GM12878 (cell line): ENCODE measurements at regions of chr13 and their contacts with region 1.

Region 1: DNA sequence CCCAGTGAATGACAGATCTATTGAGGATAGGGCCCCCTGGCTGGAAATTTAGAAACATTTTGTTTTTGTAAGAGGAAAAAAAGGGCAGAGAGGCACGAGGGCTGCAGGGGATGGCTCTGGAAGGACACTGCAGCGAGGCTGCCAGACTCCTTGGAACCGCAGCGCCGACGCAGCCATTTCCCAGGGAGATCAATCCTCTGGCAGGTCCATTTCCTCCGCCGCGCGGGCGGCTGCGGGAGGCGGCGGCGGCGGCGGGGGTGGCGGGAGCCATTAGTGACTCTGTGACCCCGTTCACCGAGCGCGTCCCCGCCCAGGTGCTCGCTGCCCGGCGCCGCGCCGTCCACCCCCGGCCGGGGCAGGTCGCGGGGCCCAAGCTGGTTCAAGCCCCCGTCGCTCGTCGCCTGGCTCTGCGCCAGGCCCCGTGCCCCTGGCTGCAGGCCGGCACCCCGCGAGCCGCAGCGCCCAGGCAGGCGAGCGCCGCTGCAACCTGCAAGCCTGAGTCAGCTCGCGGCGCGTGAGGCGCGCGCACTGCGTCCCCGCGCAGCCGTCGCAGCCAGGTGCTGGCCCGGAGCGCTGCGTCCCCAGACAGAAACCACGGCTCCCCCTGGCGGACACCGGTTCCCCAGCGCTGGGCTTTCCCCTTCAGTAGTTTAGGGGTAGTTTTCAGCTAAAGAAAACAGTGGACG is 192.6 kb downstream of the KATNAL1 start:
- DNase-seq: no peak
- ATAC-seq: peak; percentile 95
- H3K4me3 ChIP-seq: peak overlapping the region; percentile 63
- H3K27ac ChIP-seq: no peak overlapping the region
- H3K4me1 ChIP-seq: peaks cover 9% of the 10 kb centered on the region; the same call in 1 of the 2 replicates
- H3K27me3 ChIP-seq: no peaks in the 10 kb centered on the region
- CTCF ChIP-seq: peak; percentile 86 to 96 (median 95)
- EP300 ChIP-seq: peak in 1 of 2 experiments; percentile 19; a peak in 1 of 4 replicates
- POLR2A ChIP-seq: peak; percentile 84
- RAD21 ChIP-seq: peak; percentile 79

Region 2: DNA sequence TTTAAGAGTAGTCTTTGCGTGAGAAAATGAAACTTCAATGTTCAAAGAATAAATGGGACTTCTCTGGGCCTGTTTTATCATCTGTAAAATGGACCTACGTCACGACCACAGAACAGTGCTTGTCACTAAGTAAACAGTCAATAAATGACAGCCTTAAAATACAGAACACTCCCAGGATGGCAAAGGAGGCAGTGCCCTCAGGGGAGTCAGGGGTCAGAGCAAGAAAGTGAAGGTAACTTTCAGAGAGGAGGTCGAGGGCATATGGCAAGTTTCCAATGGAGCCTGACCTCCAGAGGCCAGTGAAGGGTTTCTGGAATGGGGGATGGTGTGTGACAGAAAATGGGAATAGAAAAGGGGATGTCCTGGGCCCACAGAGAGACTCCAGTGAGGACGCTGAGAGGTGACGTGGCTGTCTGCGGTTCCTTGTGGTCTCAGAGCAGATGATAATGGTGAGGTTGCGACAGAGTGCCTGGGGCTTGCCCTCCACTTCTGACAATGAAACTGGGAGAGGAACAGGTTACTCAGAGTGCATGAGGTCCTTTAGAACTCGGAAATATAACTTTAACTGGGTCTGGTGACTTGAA is 356.1 kb before region 1 on chr13:
- CTCF ChIA-PET with region 1: interaction called, 8 read pairs
- POLR2A ChIA-PET with region 1: no interaction called
- RAD21 ChIA-PET with region 1: interaction called, 5 read pairs
- SMC1A ChIA-PET with region 1: interaction called, 29 read pairs
- in situ Hi-C with region 1: no loop called
- intact Hi-C with region 1: no loop called
- DNase-seq: peak; percentile 74
- ATAC-seq: peak; percentile 96
- H3K4me3 ChIP-seq: no peak overlapping the region
- H3K27ac ChIP-seq: no peak overlapping the region
- H3K4me1 ChIP-seq: peaks cover 3% of the 10 kb centered on the region; the same call in 1 of the 2 replicates
- H3K27me3 ChIP-seq: no peaks in the 10 kb centered on the region
- CTCF ChIP-seq: no peak
- EP300 ChIP-seq: peak; percentile 67 to 76; a peak in 3 of 4 replicates
- POLR2A ChIP-seq: no peak
- RAD21 ChIP-seq: no peak

Region 3: GRCh38 chr13:29817604-29818378 is 296.9 kb before region 1 on chr13:
- CTCF ChIA-PET with region 1: interaction called, 33 read pairs
- POLR2A ChIA-PET with region 1: interaction called, 4 read pairs
- RAD21 ChIA-PET with region 1: interaction called, 10 read pairs
- SMC1A ChIA-PET with region 1: interaction called, 4 read pairs
- in situ Hi-C with region 1: no loop called
- intact Hi-C with region 1: no loop called
- DNase-seq: peak; percentile 69
- ATAC-seq: peak; percentile 97
- H3K4me3 ChIP-seq: peak overlapping the region; percentile 46; the same call in 1 of the 2 replicates
- H3K27ac ChIP-seq: peak overlapping the region; percentile 87
- H3K4me1 ChIP-seq: peaks cover 23% of the 10 kb centered on the region; the same call in 1 of the 2 replicates
- H3K27me3 ChIP-seq: no peaks in the 10 kb centered on the region
- CTCF ChIP-seq: no peak
- EP300 ChIP-seq: peak; percentile 38 to 54; a peak in 2 of 4 replicates
- POLR2A ChIP-seq: no peak
- RAD21 ChIP-seq: 0 out of 2 replicates have a peak, but pooled peaks have one; percentile 12

Region 4: DNA sequence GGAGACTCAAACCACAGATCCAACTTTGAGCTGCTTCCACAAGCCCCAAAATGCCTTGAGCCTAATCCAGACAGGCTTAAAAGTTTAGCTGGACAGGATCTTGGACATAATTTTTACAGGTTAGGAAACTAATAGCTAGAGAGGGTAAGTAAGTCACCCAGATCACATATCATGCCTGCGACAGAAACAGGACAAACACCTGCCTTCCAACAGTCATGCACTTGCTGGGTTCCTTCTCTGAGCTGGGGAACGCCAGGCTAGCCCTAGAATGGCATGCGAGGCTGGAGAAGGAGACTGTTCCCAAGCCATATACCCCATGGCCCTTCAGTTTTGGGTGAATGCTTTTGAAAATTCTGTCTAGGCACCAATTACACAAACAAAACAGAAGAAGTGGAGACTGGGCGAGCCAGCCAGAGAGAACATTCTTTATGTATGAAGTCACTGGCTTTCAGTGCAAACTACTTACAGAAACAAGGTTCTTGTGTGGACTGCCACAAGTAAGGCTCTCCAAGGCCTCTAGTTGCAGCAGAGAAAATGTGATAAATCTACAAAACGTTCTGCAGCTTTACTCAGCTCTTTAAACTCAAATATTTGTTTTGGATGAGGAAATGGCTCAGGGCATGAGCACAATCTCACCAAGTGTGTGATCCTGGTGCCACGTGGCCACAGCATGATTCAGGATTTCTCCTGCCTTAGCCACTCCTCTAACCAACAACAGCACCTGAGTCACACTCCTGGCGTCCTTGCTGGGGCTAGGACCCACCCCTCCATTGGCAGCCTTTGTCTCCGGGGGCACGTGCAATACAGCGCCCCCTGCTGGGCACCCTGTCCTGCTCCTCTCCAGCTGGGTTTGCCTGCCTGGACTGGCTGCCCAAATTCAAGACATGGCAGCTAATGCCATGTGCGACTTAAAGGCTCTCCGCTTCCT is 190.9 kb before region 1 on chr13:
- CTCF ChIA-PET with region 1: interaction called, 20 read pairs
- POLR2A ChIA-PET with region 1: no interaction called
- RAD21 ChIA-PET with region 1: interaction called, 8 read pairs
- SMC1A ChIA-PET with region 1: interaction called, 5 read pairs
- in situ Hi-C with region 1: no loop called
- intact Hi-C with region 1: no loop called
- DNase-seq: no peak
- ATAC-seq: peak; percentile 89
- H3K4me3 ChIP-seq: no peak overlapping the region
- H3K27ac ChIP-seq: no peak overlapping the region
- H3K4me1 ChIP-seq: peaks cover 5% of the 10 kb centered on the region; the same call in 1 of the 2 replicates
- H3K27me3 ChIP-seq: no peaks in the 10 kb centered on the region
- CTCF ChIP-seq: peak; percentile 49 to 89 (median 89)
- EP300 ChIP-seq: no peak
- POLR2A ChIP-seq: no peak
- RAD21 ChIP-seq: peak; percentile 58

Region 5: DNA sequence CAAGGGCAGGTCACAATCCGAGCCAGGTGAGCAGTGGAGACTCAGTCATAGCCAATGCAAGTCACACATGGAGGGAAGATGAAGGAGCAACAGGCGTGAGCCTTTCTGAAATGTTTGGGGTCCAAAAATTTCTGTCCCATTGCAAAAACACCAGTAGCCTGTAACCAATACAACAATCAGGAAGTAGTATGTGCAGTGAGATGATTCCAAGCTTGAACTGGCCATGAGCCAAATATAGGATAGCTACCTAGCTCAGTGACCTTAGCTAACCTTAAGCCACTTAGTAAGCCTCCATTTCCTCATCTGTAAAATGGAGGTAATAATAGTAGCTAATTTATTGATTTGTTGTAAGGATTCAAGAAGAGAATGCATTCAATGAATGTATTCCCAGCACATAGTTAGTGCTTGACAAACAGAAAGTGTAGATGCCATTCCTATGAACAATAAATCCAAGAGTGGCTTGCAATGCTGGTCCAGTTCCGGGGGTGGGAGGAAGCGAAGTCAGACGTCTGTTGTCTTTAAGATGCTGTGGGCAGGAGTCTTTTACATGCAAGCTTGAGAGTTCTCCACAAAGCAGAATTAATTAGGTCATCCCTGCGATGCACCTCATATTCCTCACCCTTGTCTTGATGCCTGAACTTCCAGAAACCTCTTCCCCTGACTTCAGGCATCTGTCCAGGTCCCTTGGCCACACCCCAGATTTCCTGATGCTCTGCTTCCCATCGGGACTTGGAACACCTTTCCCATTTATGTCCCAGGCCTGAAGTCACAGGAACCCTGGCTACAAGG is 68.6 kb before region 1 on chr13:
- CTCF ChIA-PET with region 1: interaction called, 11 read pairs
- POLR2A ChIA-PET with region 1: no interaction called
- RAD21 ChIA-PET with region 1: interaction called, 3 read pairs
- SMC1A ChIA-PET with region 1: no interaction called
- in situ Hi-C with region 1: no loop called
- intact Hi-C with region 1: no loop called
- DNase-seq: no peak
- ATAC-seq: no peak
- H3K4me3 ChIP-seq: no peak overlapping the region
- H3K27ac ChIP-seq: no peak overlapping the region
- H3K4me1 ChIP-seq: no peaks in the 10 kb centered on the region
- H3K27me3 ChIP-seq: no peaks in the 10 kb centered on the region
- CTCF ChIP-seq: no peak
- EP300 ChIP-seq: no peak
- POLR2A ChIP-seq: no peak
- RAD21 ChIP-seq: no peak

Region 6: GRCh38 chr13:30125422-30126073 is 10.8 kb after region 1 on chr13:
- CTCF ChIA-PET with region 1: interaction called, 18 read pairs
- POLR2A ChIA-PET with region 1: no interaction called
- RAD21 ChIA-PET with region 1: no interaction called
- SMC1A ChIA-PET with region 1: interaction called, 21 read pairs
- in situ Hi-C with region 1: no loop called
- intact Hi-C with region 1: no loop called
- DNase-seq: no peak
- ATAC-seq: no peak
- H3K4me3 ChIP-seq: no peak overlapping the region
- H3K27ac ChIP-seq: no peak overlapping the region
- H3K4me1 ChIP-seq: no peaks in the 10 kb centered on the region
- H3K27me3 ChIP-seq: no peaks in the 10 kb centered on the region
- CTCF ChIP-seq: no peak
- EP300 ChIP-seq: no peak
- POLR2A ChIP-seq: no peak
- RAD21 ChIP-seq: no peak